A673 (cell line): ENCODE measurements at regions of chr7 and their contacts with region 1.

Region 1: DNA sequence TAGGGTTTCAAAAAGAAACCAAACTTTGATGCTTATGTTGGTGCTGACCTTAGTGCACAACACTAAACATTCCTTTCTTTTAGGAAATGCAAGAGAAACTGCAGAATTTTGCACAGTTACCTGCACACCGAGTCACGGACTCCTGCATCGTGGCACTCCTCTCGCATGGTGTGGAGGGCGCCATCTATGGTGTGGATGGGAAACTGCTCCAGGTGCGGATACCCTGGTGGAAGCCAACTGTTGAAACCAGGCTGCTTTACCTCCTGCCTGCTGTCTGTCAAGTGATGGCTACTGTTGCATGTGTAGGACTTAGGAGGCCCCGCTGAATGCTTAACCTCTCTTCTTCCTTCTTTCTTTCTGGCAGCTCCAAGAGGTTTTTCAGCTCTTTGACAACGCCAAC is 11.7 kb downstream of the CASP2 start:
- DNase-seq: peak; percentile 47
- H3K4me3 ChIP-seq: no peak overlapping the region
- H3K27ac ChIP-seq: no peak overlapping the region
- H3K4me1 ChIP-seq: peaks cover 28% of the 10 kb centered on the region
- H3K27me3 ChIP-seq: no peaks in the 10 kb centered on the region
- CTCF ChIP-seq: peak; percentile 80

Region 2: DNA sequence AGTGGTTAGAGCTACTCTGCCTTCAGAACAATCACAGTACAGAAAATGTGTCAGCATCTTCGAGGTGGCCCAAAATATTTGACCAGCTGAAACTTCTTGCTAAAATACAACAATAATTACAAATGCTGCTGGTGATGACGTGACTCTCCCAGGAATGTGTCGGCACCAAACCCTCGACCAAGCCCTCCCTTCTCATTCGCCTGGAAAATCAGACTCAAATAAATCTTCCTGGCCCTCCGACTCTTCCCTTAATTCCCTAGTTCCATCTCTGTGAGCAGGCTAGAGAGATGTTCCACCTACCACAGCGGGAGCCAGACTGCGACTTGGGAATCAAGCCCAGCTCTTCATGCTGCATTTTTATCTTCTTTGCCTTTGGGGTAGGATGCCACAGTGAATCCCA is 525.0 kb before region 1 on chr7:
- CTCF ChIA-PET with region 1: no interaction called
- POLR2A ChIA-PET with region 1: interaction called, 10 read pairs
- intact Hi-C with region 1: no loop called
- DNase-seq: no peak
- H3K4me3 ChIP-seq: no peak overlapping the region
- H3K27ac ChIP-seq: no peak overlapping the region
- H3K4me1 ChIP-seq: no peaks in the 10 kb centered on the region
- H3K27me3 ChIP-seq: peaks cover 6% of the 10 kb centered on the region
- CTCF ChIP-seq: no peak

Region 3: DNA sequence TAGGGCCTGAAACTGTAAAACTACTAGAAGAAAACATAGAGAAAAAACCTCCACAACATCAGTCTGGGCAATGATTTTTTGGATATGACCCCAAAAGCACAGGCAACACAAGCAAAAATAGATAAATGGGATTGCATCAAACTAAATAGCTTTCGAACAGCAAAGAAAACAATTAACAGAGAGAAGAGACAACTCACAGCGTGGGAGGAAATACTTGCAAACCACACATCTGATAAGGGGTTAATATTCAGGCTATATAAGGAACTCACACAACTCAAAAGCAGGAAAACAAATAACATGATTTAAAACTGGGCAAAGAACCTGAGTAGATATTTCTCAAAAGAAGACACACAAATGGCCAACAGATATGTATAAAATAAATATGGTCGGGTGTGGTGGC is 44.3 kb before region 1 on chr7:
- CTCF ChIA-PET with region 1: no interaction called
- POLR2A ChIA-PET with region 1: no interaction called
- intact Hi-C with region 1: loop called (anchors 2 kb)
- DNase-seq: no peak
- H3K4me3 ChIP-seq: no peak overlapping the region
- H3K27ac ChIP-seq: no peak overlapping the region
- H3K4me1 ChIP-seq: no peaks in the 10 kb centered on the region
- H3K27me3 ChIP-seq: no peaks in the 10 kb centered on the region
- CTCF ChIP-seq: no peak